Endothelial cell of umbilical vein (primary cell): ENCODE measurements at regions of chr6 and their contacts with region 1.

Region 1: GRCh38 chr6:161370880-161371279 is 97.0 kb upstream of the AGPAT4 start:
- DNase-seq: peak; percentile 62
- H3K4me3 ChIP-seq: no peak overlapping the region
- H3K27ac ChIP-seq: no peak overlapping the region
- H3K4me1 ChIP-seq: no peaks in the 10 kb centered on the region
- H3K27me3 ChIP-seq: no peaks in the 10 kb centered on the region
- CTCF ChIP-seq: peak; percentile 89 to 91
- POLR2A ChIP-seq: no peak

Region 2: GRCh38 chr6:160137989-160138835 is 1232.7 kb before region 1 on chr6:
- CTCF ChIA-PET with region 1: no interaction called
- POLR2A ChIA-PET with region 1: no interaction called
- dilution Hi-C with region 1: no loop called
- intact Hi-C with region 1: loop called (anchors 5 kb)
- DNase-seq: peak; percentile 56
- H3K4me3 ChIP-seq: no peak overlapping the region
- H3K27ac ChIP-seq: no peak overlapping the region
- H3K4me1 ChIP-seq: no peaks in the 10 kb centered on the region
- H3K27me3 ChIP-seq: no peaks in the 10 kb centered on the region
- CTCF ChIP-seq: peak; percentile 49 to 59
- POLR2A ChIP-seq: no peak

Region 3: GRCh38 chr6:160930547-160931377 is 440.1 kb before region 1 on chr6:
- CTCF ChIA-PET with region 1: interaction called, 671 read pairs
- POLR2A ChIA-PET with region 1: no interaction called
- dilution Hi-C with region 1: no loop called
- intact Hi-C with region 1: loop called (anchors 1 kb)
- DNase-seq: peak; percentile 59
- H3K4me3 ChIP-seq: peak overlapping the region; percentile 22 to 39 (median 31)
- H3K27ac ChIP-seq: no peak overlapping the region
- H3K4me1 ChIP-seq: peaks cover 2% of the 10 kb centered on the region
- H3K27me3 ChIP-seq: peaks cover 0 to 3% of the 10 kb centered on the region in 2 experiments
- CTCF ChIP-seq: peak; percentile 87 to 94
- POLR2A ChIP-seq: no peak

Region 4: GRCh38 chr6:161115468-161115867 is 255.4 kb before region 1 on chr6:
- CTCF ChIA-PET with region 1: interaction called, 10 read pairs
- POLR2A ChIA-PET with region 1: no interaction called
- dilution Hi-C with region 1: no loop called
- intact Hi-C with region 1: no loop called
- DNase-seq: no peak
- H3K4me3 ChIP-seq: no peak overlapping the region
- H3K27ac ChIP-seq: no peak overlapping the region
- H3K4me1 ChIP-seq: no peaks in the 10 kb centered on the region
- H3K27me3 ChIP-seq: no peaks in the 10 kb centered on the region
- CTCF ChIP-seq: no peak
- POLR2A ChIP-seq: no peak

Region 5: GRCh38 chr6:161168281-161168891 is 202.5 kb before region 1 on chr6:
- CTCF ChIA-PET with region 1: interaction called, 11 read pairs
- POLR2A ChIA-PET with region 1: no interaction called
- dilution Hi-C with region 1: no loop called
- intact Hi-C with region 1: no loop called
- DNase-seq: peak; percentile 84
- H3K4me3 ChIP-seq: no peak overlapping the region
- H3K27ac ChIP-seq: peak overlapping the region; percentile 43
- H3K4me1 ChIP-seq: peaks cover 15% of the 10 kb centered on the region
- H3K27me3 ChIP-seq: no peaks in the 10 kb centered on the region
- CTCF ChIP-seq: no peak
- POLR2A ChIP-seq: no peak

Region 6: DNA sequence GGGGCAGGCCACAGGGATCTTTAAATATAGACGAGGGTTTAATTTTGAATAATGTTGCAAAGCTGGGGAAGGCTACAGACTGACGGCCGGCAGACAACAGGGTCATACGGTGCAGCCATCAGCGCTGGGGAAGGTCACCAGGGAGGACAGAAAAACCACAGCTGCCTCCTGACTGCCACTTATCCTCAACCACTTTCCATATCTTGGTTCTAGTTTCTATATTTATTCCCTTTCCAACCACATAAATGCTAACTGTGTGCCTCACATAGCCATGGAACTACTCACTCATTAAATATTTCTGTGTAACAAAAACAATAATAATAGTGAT is 11.3 kb before region 1 on chr6:
- CTCF ChIA-PET with region 1: interaction called, 23 read pairs
- POLR2A ChIA-PET with region 1: no interaction called
- dilution Hi-C with region 1: no loop called
- intact Hi-C with region 1: no loop called
- DNase-seq: no peak
- H3K4me3 ChIP-seq: no peak overlapping the region
- H3K27ac ChIP-seq: no peak overlapping the region
- H3K4me1 ChIP-seq: no peaks in the 10 kb centered on the region
- H3K27me3 ChIP-seq: no peaks in the 10 kb centered on the region
- CTCF ChIP-seq: no peak
- POLR2A ChIP-seq: no peak